ENCODE measurements at regions of chr1 and their contacts with region 1.

Region 1: GRCh38 chr1:116139592-116140134 is 28.5 kb downstream of the MAB21L3 start:
- DNase-seq: no peak
- H3K27ac ChIP-seq: no peak overlapping the region
- CTCF ChIP-seq: no peak

Region 2: GRCh38 chr1:116151739-116152576 is 12.3 kb after region 1 on chr1:
- CTCF ChIA-PET with region 1: interaction called, 40 read pairs
- POLR2A ChIA-PET with region 1: no interaction called
- DNase-seq: peak; percentile 83
- H3K27ac ChIP-seq: peak overlapping the region; percentile 48; the same call in 1 of the 2 replicates
- CTCF ChIP-seq: peak; percentile 95

Region 3: GRCh38 chr1:116168277-116169097 is 28.8 kb after region 1 on chr1:
- CTCF ChIA-PET with region 1: no interaction called
- POLR2A ChIA-PET with region 1: no interaction called
- DNase-seq: peak; percentile 35
- H3K27ac ChIP-seq: no peak overlapping the region
- CTCF ChIP-seq: peak; percentile 77

Region 4: DNA sequence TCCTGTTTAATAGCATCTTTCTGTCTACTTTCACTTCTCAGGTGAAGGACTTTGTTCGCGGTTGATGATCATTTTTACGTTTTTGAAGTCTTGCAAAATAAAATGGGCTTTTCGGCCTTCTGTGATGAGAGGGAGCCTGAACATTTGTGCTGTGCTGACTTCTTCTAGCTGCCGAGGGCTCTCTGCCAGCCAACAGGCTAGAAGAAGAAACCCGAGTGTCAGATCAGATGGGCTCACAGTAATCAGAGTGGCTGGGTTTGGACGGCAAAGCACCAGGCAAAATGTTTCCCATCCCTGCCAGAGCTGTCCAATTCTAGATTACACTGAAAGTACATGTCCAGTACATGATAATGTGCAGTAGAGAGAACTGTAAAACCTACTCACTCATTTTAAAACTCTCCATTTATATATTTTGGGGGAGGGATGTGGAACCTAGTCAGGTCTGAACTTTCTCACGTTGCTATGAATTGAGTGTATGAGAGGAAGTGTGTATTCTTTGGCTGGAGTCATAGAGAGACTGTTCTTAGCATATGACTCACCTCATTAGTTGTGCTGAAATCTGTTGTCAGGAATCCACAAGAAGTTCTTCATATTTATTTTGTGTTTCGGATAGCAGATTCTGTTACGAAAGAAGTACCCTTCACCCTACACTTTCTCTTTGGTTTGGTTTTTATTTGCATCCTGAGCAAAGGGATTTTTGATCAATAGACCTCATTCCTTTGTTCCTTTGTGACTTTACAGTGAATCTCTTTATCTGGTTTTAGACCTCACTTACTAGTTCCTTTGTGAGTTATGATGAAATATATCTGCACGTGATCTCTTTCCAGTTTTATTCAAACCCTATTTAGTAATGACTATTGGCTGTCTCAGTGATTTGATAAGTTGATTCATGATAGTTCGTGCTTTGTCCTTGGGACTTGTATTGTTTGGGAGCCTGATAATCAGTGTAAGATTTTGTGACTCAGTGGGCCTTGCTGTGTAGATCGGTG is 238.2 kb after region 1 on chr1:
- CTCF ChIA-PET with region 1: interaction called, 10 read pairs
- POLR2A ChIA-PET with region 1: no interaction called
- DNase-seq: peak; percentile 66
- H3K27ac ChIP-seq: peak overlapping the region; percentile 95
- CTCF ChIP-seq: no peak

Region 5: GRCh38 chr1:116490588-116490987 is 350.9 kb after region 1 on chr1:
- CTCF ChIA-PET with region 1: interaction called, 91 read pairs
- POLR2A ChIA-PET with region 1: no interaction called
- DNase-seq: no peak
- H3K27ac ChIP-seq: no peak overlapping the region
- CTCF ChIP-seq: no peak

Region 6: GRCh38 chr1:116498789-116499628 is 359.3 kb after region 1 on chr1:
- CTCF ChIA-PET with region 1: interaction called, 73 read pairs
- POLR2A ChIA-PET with region 1: no interaction called
- DNase-seq: peak; percentile 70
- H3K27ac ChIP-seq: peak overlapping the region; percentile 35; the same call in 1 of the 2 replicates
- CTCF ChIP-seq: peak; percentile 83